MCF 10A (cell line): ENCODE measurements at regions of chr13 and their contacts with region 1.

Region 1: GRCh38 chr13:48037346-48038173 is at the start of gene NUDT15:
- DNase-seq: peak; percentile 95
- H3K4me3 Mint-ChIP-seq: peak within 1 kb of the TSS; percentile 90
- H3K27ac Mint-ChIP-seq: peak within 1 kb of the TSS; percentile 96
- H3K4me1 Mint-ChIP-seq: peaks cover 10% of the 10 kb centered on the region
- H3K27me3 Mint-ChIP-seq: no peaks in the 10 kb centered on the region
- CTCF ChIP-seq: peak; percentile 97
- total RNA-seq, gene NUDT15: 12.0 and 21.6 TPM in 2 replicates

Region 2: DNA sequence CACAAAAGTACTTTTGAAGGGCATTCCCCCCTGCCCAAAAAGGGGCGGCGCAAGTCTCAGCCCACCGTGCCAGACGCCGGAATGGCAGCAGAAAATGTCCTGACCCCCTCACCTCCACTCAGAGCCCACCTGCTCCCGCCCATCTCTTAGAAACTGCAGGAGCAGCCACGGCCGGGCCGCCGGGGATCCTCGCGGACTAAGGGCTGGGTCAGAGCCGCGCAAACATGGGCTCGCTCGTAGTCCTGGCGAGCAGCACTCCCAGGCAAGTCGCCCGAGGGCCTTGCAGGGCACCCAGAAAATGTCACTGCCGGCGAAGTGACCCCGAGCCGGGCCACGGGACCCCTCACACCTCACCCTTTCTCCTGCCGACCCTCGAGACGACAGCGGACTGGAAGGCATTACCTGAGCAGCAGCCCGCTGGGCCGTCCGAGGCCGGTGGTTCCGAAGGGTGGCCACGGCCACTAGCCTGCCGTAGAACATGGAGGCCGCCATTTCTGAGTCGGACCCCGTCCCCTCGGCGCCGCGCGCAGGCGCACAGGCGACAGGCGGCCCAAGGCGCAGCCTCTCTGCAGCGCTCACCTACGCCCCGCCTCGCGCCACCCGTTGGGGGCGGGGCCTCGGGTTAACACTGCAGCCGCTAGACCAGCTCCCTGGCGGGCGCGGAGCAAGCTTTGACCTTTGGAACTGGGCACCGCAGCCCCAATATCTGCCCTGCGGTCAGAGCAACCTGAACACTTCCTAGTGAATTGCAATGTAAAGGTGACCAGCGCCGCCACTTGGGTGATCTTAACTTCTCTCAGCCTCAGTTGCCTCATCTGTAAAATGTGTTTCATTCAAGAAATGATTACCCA is 36.6 kb before region 1 on chr13 and contains the start of gene SUCLA2:
- CTCF ChIA-PET with region 1: interaction called, 24 read pairs
- POLR2A ChIA-PET with region 1: interaction called, 70 read pairs
- intact Hi-C with region 1: loop called (anchors 2 kb)
- DNase-seq: peak; percentile 91
- H3K4me3 Mint-ChIP-seq: peak within 1 kb of the TSS; percentile 80
- H3K27ac Mint-ChIP-seq: peak within 1 kb of the TSS; percentile 91
- H3K4me1 Mint-ChIP-seq: peaks cover 41% of the 10 kb centered on the region
- H3K27me3 Mint-ChIP-seq: no peaks in the 10 kb centered on the region
- CTCF ChIP-seq: no peak
- total RNA-seq, gene SUCLA2: 40.6 and 42.1 TPM in 2 replicates

Region 3: DNA sequence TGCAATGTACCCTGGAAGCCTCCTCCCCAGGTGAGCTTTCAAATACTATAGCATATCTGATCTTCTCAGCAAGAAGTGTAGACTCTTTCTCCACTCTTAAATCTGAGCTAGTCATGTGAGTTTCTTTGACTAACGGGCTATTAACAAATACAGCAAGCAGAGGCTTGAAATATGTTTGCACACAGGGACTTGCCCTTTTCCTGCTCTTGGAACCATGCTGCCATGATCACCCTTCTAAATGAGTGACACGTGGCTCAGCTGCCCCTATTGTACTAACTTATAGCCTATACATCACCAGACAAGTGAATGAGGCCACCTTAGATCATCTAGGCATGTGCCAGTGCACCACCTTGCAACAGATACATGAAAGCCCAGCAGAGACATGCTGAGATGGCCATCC is 23.2 kb before region 1 on chr13:
- CTCF ChIA-PET with region 1: interaction called, 19 read pairs
- POLR2A ChIA-PET with region 1: interaction called, 38 read pairs
- intact Hi-C with region 1: loop called (anchors 2 kb)
- DNase-seq: no peak
- H3K4me3 Mint-ChIP-seq: no peak overlapping the region
- H3K27ac Mint-ChIP-seq: no peak overlapping the region
- H3K4me1 Mint-ChIP-seq: peaks cover 8% of the 10 kb centered on the region
- H3K27me3 Mint-ChIP-seq: no peaks in the 10 kb centered on the region
- CTCF ChIP-seq: no peak

Region 4: DNA sequence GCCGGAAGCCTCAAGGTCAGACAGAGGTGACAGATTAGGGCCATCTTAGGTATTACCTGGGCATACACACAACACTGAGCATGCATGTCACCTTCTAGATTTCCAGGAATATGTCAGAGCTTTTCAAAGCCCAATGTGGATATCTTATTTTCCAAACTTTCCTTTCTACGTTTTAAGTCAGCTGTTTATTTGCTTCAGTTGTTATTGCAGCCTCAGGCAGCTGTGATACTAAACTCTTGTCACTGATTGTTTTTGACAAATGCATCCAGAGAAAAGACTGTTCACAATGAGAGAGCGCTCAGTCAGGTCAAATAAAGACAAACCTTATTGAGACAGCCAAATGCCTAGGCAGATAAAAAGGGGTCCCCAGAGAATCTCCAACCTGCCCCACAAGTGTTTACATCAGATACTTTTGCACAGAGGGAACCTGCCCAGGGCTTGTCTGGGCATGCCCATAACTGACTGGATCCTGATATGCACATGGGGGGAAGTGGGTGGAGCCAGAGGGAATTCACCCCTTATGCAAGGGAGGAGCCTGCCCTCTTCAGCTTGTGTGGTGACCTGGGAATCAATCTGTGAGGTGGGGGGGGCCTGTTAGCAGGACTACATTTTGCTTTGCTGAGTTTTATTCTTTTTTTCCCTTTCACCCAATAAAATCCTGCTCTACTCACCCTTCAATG is 28.9 kb after region 1 on chr13:
- CTCF ChIA-PET with region 1: interaction called, 10 read pairs
- POLR2A ChIA-PET with region 1: interaction called, 9 read pairs
- intact Hi-C with region 1: no loop called
- DNase-seq: peak; percentile 57
- H3K4me3 Mint-ChIP-seq: no peak overlapping the region
- H3K27ac Mint-ChIP-seq: peak overlapping the region; percentile 91
- H3K4me1 Mint-ChIP-seq: no peaks in the 10 kb centered on the region
- H3K27me3 Mint-ChIP-seq: no peaks in the 10 kb centered on the region
- CTCF ChIP-seq: no peak

Region 5: DNA sequence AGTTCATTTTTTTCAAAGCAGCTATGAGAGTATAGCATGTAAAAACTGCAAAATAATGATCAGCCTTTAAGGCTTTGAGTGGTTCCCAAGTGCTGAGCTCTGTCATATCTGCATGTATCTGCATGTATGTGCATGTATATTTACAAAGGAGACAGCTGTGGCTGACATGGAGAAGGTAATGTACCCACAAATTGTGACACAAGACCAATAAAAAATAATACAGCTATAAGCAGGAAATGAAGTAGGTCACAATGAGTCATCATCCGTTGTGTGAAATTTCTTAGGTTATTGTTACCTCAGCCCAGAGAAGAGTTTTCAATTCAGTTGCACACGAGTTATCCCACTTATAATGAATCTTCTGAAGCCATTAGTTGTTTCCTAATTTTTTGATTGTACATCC is 118.3 kb after region 1 on chr13:
- CTCF ChIA-PET with region 1: no interaction called
- POLR2A ChIA-PET with region 1: no interaction called
- intact Hi-C with region 1: no loop called
- DNase-seq: peak; percentile 89
- H3K4me3 Mint-ChIP-seq: peak overlapping the region; percentile 23
- H3K27ac Mint-ChIP-seq: peak overlapping the region; percentile 78
- H3K4me1 Mint-ChIP-seq: peaks cover 43% of the 10 kb centered on the region
- H3K27me3 Mint-ChIP-seq: no peaks in the 10 kb centered on the region
- CTCF ChIP-seq: no peak

Region 6: DNA sequence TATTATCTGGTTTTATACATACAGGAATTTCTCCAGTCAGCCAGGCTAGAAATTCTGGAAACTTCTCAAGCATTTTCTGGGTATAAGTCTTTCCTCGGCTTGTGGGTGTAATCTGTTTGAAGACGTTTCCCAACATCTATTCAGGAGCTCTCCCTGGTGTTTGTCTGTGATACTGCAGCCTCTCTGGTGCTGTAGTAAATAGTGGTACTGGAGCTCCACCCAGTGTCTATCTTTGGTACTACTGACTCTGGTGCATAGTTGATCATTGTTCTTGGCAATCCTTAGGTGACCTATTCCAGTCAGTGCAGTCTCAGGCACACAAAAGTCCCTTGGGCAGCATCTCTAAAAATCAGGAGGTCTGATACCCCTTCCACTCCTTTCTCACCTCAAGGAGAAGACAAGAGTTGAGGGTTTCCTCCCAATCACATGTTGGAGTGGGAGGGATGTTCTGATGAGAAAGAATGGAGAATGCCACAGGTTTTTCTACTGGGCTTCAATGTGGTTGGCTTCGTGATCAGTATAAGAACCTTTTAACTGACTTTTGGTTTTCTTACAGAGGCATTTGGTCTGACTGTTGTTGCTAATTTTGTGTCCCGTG is 731.6 kb after region 1 on chr13:
- CTCF ChIA-PET with region 1: interaction called, 7 read pairs
- POLR2A ChIA-PET with region 1: interaction called, 6 read pairs
- intact Hi-C with region 1: loop called (anchors 5 kb)
- DNase-seq: peak; percentile 90
- H3K4me3 Mint-ChIP-seq: no peak overlapping the region
- H3K27ac Mint-ChIP-seq: no peak overlapping the region
- H3K4me1 Mint-ChIP-seq: peaks cover 7% of the 10 kb centered on the region
- H3K27me3 Mint-ChIP-seq: no peaks in the 10 kb centered on the region
- CTCF ChIP-seq: peak; percentile 100

Region 7: DNA sequence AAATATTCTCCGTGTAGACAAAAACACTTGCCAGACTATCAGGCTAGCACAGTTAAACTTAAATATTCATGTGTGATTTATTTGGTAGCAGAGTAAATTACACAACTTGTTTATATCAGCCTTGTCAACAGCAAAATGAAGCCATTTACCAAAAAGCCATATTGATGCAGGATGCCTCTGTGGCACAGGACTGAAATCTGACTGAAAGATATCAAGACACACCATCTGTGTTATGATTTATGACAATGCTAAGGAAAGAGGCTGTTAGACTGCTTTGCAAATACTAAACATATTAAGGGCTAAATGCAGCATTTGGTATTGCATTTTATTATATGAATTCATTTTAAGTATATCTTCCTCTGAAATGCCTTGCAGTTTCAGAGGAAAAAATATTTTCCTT is 893.4 kb after region 1 on chr13:
- CTCF ChIA-PET with region 1: no interaction called
- POLR2A ChIA-PET with region 1: no interaction called
- intact Hi-C with region 1: no loop called
- DNase-seq: no peak
- H3K4me3 Mint-ChIP-seq: no peak overlapping the region
- H3K27ac Mint-ChIP-seq: no peak overlapping the region
- H3K4me1 Mint-ChIP-seq: peaks cover 9% of the 10 kb centered on the region
- H3K27me3 Mint-ChIP-seq: no peaks in the 10 kb centered on the region
- CTCF ChIP-seq: no peak